ENCODE measurements at regions of chr11 and their contacts with region 1.

Region 1: GRCh38 chr11:124673333-124674167 is at the starts of genes SIAE and SPA17:
- DNase-seq: peak; percentile 97
- H3K4me3 ChIP-seq: peak within 1 kb of the TSS; percentile 65 to 95 (median 65)
- H3K27ac ChIP-seq: peak within 1 kb of the TSS; percentile 63
- H3K4me1 ChIP-seq: peaks cover 26% of the 10 kb centered on the region
- H3K27me3 ChIP-seq: no peaks in the 10 kb centered on the region
- CTCF ChIP-seq: no peak
- POLR2A ChIP-seq: peak; percentile 96
- total RNA-seq, gene SIAE: 15.1 and 16.9 TPM in 2 replicates
- total RNA-seq, gene SPA17: 4.7 and 6.1 TPM in 2 replicates

Region 2: DNA sequence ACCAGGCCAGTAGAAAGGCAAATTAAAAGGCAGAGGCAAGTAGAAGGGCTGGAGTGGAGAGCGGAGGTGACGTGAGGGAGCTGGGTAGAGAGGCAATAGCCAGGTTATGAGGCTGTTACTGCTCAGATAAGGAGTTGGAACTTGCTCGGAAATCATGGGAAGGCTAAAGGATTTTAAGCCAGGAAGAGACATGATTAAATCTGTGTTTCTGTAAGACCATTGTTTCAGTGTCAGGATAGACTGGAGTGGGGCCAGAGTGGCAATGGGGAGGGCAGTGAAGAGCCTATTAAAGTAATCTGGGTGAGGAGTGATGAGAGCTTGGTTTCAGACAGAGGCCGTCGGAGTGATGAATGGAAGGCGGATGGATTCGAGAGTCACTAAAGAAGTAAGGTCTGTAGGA is 1204.5 kb before region 1 on chr11:
- CTCF ChIA-PET with region 1: no interaction called
- POLR2A ChIA-PET with region 1: no interaction called
- dilution Hi-C with region 1: no loop called
- intact Hi-C with region 1: loop called (anchors 5 kb)
- DNase-seq: peak; percentile 79
- H3K4me3 ChIP-seq: no peak overlapping the region
- H3K27ac ChIP-seq: peak overlapping the region; percentile 24
- H3K4me1 ChIP-seq: peaks cover 15% of the 10 kb centered on the region
- H3K27me3 ChIP-seq: no peaks in the 10 kb centered on the region
- CTCF ChIP-seq: no peak
- POLR2A ChIP-seq: no peak

Region 3: DNA sequence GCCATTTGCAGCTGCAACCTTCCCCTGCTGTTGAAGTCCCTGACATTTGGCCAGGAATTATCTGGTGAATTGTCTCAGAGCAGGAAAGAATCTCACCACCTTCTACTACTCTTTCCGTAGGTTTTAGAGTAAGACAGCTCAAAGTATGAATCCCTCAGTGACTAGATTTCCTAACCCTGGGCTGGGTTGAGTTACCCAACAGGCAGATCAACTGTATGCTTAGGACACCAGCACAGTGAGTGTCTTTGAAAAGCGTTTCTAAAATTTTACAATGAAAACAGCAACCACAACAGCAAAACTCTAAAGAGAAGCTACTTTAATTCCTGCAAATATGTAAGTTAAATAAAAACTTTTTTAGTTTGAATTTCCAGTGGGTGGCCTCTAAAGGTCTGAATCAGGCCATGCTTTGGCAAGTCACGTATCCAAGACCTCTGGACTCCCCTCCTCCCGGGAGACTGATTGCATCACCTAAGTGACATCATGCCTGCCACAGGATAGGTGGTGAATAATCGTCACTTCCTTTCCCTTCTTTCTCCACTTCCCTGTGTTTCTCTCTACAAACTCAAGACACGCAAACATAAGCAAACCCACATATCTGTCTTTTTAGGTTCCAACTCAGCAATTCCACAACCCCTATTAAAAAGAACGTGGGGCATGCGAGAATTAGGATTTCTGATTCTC is 137.9 kb before region 1 on chr11:
- CTCF ChIA-PET with region 1: no interaction called
- POLR2A ChIA-PET with region 1: no interaction called
- dilution Hi-C with region 1: no loop called
- intact Hi-C with region 1: no loop called
- DNase-seq: no peak
- H3K4me3 ChIP-seq: no peak overlapping the region
- H3K27ac ChIP-seq: no peak overlapping the region
- H3K4me1 ChIP-seq: no peaks in the 10 kb centered on the region
- H3K27me3 ChIP-seq: peaks cover 0 to 1% of the 10 kb centered on the region in 2 experiments
- CTCF ChIP-seq: no peak
- POLR2A ChIP-seq: no peak

Region 4: DNA sequence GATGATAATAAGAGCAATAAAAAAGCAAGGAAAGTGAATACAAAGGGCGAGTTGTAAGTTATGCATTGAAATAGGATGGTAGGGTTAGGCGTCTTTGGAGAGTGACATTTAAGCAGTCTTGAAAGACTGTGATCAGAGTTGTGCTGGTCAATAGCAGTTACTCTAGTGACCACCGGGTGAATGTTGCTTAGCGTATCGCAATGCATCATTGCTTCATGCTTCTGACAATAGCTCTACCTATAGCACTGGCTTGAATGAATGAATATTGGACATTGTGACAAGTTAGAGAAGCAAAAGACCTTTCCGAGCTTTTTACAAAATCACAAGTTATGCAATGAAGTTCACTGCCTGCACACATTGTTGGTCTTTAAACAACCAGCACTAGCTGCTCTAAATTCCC is 122.4 kb before region 1 on chr11:
- CTCF ChIA-PET with region 1: no interaction called
- POLR2A ChIA-PET with region 1: no interaction called
- dilution Hi-C with region 1: no loop called
- intact Hi-C with region 1: no loop called
- DNase-seq: no peak
- H3K4me3 ChIP-seq: no peak overlapping the region
- H3K27ac ChIP-seq: no peak overlapping the region
- H3K4me1 ChIP-seq: no peaks in the 10 kb centered on the region
- H3K27me3 ChIP-seq: no peaks in the 10 kb centered on the region
- CTCF ChIP-seq: no peak
- POLR2A ChIP-seq: no peak

Region 5: DNA sequence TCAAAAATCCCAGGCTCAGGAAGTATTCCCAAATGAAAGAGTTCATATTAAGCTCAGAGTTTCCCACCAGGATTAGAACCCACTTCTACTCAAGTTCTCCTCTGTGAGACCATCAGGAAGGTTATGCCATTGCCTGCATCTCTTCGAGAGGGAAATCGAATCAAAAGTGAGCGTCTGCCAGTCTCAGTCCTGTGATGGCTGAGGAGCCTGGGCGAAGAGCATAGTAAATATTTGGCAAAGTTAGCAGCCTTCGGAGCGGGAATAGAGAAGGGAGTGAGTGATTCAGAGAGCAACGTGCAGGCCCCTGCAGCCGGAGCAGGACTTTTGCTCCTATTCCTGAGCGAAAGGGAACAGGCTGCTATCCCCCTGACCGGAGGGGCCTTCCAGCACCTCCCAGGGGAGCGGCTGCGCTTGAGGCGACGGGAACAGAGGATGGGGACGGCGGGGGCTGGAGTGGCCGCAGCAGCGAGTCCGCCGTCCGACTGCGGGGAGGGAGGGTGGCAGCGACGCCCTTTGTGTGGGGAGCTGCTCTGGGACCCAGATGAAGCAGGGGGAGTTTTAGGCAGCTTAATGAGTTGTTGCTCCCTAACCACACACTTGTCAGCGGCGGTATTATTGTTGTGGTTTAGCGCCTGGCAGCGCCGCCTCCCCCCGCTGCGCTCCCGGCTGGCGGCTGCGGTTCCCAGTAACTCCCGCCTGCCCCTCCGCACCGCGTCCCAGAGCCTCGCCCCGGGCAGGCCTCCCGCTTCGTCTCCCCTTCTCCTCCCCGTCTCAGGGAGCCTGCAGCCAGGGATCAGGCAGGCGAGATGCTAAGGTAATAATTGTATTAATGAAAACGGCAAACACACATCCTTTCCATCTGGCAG is 44.5 kb after region 1 on chr11:
- CTCF ChIA-PET with region 1: interaction called, 15 read pairs
- POLR2A ChIA-PET with region 1: no interaction called
- dilution Hi-C with region 1: no loop called
- intact Hi-C with region 1: loop called (anchors 1 kb)
- DNase-seq: peak; percentile 78
- H3K4me3 ChIP-seq: peak overlapping the region; percentile 26 to 61 (median 39)
- H3K27ac ChIP-seq: peak overlapping the region; percentile 62
- H3K4me1 ChIP-seq: peaks cover 24% of the 10 kb centered on the region
- H3K27me3 ChIP-seq: no peaks in the 10 kb centered on the region
- CTCF ChIP-seq: no peak
- POLR2A ChIP-seq: peak; percentile 11

Region 6: GRCh38 chr11:124746621-124747243 is 73.2 kb after region 1 on chr11:
- CTCF ChIA-PET with region 1: interaction called, 267 read pairs
- POLR2A ChIA-PET with region 1: interaction called, 6 read pairs
- dilution Hi-C with region 1: no loop called
- intact Hi-C with region 1: loop called (anchors 1 kb)
- DNase-seq: peak; percentile 93
- H3K4me3 ChIP-seq: peak overlapping the region in 2 of 3 experiments; percentile 36 to 46
- H3K27ac ChIP-seq: peak overlapping the region; percentile 70
- H3K4me1 ChIP-seq: peaks cover 40% of the 10 kb centered on the region
- H3K27me3 ChIP-seq: no peaks in the 10 kb centered on the region
- CTCF ChIP-seq: peak; percentile 62 to 79
- POLR2A ChIP-seq: peak; percentile 72

Region 7: GRCh38 chr11:124769801-124770639 is 96.5 kb after region 1 on chr11:
- CTCF ChIA-PET with region 1: interaction called, 27 read pairs
- POLR2A ChIA-PET with region 1: no interaction called
- dilution Hi-C with region 1: no loop called
- intact Hi-C with region 1: no loop called
- DNase-seq: peak; percentile 72
- H3K4me3 ChIP-seq: no peak overlapping the region
- H3K27ac ChIP-seq: peak overlapping the region; percentile 86
- H3K4me1 ChIP-seq: peaks cover 34% of the 10 kb centered on the region
- H3K27me3 ChIP-seq: no peaks in the 10 kb centered on the region
- CTCF ChIP-seq: no peak
- POLR2A ChIP-seq: peak; percentile 41

Region 8: DNA sequence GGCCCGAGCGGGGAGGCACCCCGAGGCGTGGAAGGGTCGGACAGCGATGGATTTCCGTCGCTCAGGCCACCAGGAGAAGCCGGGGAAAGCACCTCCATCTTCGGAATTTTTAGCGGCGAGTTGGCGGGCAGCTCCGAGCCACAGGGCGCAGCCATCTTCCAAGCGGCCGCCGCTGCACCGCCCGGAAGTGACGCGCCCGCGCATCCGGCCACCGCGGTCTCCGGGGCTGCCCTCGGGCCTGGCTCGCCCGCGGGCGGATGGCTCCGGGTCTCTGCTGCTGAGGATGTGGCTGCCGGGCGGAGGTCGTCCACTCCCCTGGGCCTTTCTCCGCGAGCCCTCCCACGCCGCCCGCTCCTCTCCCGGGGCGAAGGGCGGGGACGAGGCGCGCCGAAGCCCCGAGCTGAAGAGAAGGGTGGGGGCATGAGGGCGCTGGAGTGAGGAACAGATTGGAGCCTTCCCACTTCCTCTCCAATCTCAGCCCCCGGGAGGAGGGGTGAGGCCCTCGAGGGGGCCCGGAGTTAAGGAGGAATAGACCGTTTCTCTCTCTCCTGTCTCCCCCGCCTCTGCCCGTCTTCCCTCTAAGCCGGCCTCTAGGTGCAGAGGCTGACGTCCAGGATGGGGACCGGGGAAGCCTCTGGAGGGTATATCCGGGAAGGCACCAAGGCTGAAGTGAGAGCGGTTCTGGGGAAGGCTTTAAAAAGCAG is 126.8 kb after region 1 on chr11 and contains the start of gene MSANTD2:
- CTCF ChIA-PET with region 1: interaction called, 74 read pairs
- POLR2A ChIA-PET with region 1: no interaction called
- dilution Hi-C with region 1: no loop called
- intact Hi-C with region 1: loop called (anchors 1 kb)
- DNase-seq: peak; percentile 82
- H3K4me3 ChIP-seq: peak within 1 kb of the TSS; percentile 59 to 98 (median 62)
- H3K27ac ChIP-seq: peak within 1 kb of the TSS; percentile 81
- H3K4me1 ChIP-seq: peaks cover 20% of the 10 kb centered on the region
- H3K27me3 ChIP-seq: no peaks in the 10 kb centered on the region
- CTCF ChIP-seq: no peak
- POLR2A ChIP-seq: peak; percentile 81
- total RNA-seq, gene MSANTD2: 17.0 and 23.2 TPM in 2 replicates